HEK293 (cell line): ENCODE measurements at regions of chr2 and their contacts with region 1.

Region 1: DNA sequence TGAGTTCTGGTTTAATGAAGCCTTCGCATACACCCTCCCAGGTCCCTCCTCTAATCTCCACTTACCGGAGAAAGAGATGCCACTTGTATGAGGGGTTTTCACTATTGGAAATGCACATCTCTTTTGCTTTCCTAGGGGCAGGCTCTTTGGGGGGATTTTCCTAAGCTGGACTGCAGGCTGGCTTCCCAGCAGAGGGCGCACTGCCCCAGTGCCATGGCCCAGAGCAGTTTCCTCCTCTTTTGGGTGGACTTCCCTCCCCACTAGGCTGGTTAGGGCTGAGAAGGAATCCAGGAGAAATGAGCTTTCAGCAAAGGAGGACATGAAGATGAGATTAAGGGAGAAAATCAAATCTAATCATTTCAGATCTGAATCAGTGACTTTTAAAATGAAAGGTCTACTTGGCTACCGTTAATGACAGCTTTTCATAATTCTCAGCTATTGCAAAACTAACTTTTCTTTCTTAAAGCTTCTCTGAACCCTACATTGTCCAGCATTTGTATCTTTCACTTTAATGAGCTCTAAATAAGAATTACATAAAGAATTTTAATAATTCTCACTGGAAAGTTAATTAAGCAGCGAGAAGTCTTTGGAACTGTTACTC is 784.1 kb upstream of the FANCL start:
- H3K4me3 ChIP-seq: no peak overlapping the region
- H3K27ac ChIP-seq: no peak overlapping the region
- H3K4me1 ChIP-seq: no peaks in the 10 kb centered on the region
- CTCF ChIP-seq: peak; percentile 34; the same call in 1 of the 2 replicates

Region 2: GRCh38 chr2:58992062-58992706 is 33.1 kb before region 1 on chr2:
- CTCF ChIA-PET with region 1: interaction called, 10 read pairs
- POLR2A ChIA-PET with region 1: no interaction called
- H3K4me3 ChIP-seq: no peak overlapping the region
- H3K27ac ChIP-seq: no peak overlapping the region
- H3K4me1 ChIP-seq: no peaks in the 10 kb centered on the region
- CTCF ChIP-seq: no peak

Region 3: GRCh38 chr2:59000796-59001195 is 24.5 kb before region 1 on chr2:
- CTCF ChIA-PET with region 1: interaction called, 25 read pairs
- POLR2A ChIA-PET with region 1: no interaction called
- H3K4me3 ChIP-seq: no peak overlapping the region
- H3K27ac ChIP-seq: no peak overlapping the region
- H3K4me1 ChIP-seq: 0 out of 2 replicates have a peak, but pooled peaks cover 4% of the 10 kb centered on the region
- CTCF ChIP-seq: no peak

Region 4: GRCh38 chr2:59005836-59006615 is 19.2 kb before region 1 on chr2:
- CTCF ChIA-PET with region 1: interaction called, 26 read pairs
- POLR2A ChIA-PET with region 1: no interaction called
- H3K4me3 ChIP-seq: no peak overlapping the region
- H3K27ac ChIP-seq: no peak overlapping the region
- H3K4me1 ChIP-seq: 0 out of 2 replicates have a peak, but pooled peaks cover 4% of the 10 kb centered on the region
- CTCF ChIP-seq: no peak

Region 5: GRCh38 chr2:59015027-59015426 is 10.2 kb before region 1 on chr2:
- CTCF ChIA-PET with region 1: interaction called, 26 read pairs
- POLR2A ChIA-PET with region 1: no interaction called
- H3K4me3 ChIP-seq: no peak overlapping the region
- H3K27ac ChIP-seq: no peak overlapping the region
- H3K4me1 ChIP-seq: no peaks in the 10 kb centered on the region
- CTCF ChIP-seq: no peak

Region 6: GRCh38 chr2:59182249-59182648 is 157.0 kb after region 1 on chr2:
- CTCF ChIA-PET with region 1: interaction called, 11 read pairs
- POLR2A ChIA-PET with region 1: no interaction called
- H3K4me3 ChIP-seq: no peak overlapping the region
- H3K27ac ChIP-seq: no peak overlapping the region
- H3K4me1 ChIP-seq: no peaks in the 10 kb centered on the region
- CTCF ChIP-seq: no peak

Region 7: DNA sequence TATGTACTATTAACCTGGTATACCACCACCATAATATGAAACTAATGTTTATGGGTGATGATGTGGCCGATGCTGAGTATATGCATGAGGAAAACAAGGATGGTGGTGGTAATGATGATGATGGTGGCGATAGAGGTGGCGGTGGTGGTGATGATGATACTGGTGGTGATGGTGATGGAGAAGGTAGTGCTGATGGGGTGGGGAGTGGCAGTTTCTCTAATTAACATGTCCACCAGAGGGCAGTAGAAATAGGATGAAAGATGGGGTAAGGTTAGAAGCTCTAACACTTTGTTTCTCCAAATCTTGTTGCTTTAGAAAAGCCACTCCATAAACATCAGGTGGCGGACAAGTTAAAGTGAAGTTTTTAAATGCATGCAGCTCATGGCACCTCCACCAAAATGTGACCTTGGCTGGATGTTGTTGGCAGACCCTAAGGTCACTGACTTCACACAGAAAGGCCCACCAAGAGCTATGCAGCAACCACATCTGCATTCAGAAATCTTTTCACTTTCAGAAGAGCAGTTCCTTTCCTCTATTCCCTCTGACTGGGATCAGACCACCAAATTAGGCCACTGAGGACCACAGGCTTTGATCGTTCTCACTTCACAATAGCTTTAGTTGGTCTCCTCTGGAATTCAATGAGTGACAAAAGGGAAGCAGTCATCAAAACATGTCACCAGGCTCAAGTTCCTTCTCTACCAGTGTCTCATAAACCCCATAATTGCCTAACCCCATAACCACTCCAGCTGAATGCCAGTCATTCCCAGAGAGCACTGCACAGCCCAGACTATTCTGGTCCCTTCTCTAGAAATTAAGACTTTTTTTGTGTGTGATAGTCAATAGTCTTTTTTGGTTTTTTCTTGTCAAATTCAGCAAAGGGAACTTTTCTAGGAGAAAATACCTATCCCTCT is 1535.7 kb after region 1 on chr2:
- CTCF ChIA-PET with region 1: interaction called, 13 read pairs
- POLR2A ChIA-PET with region 1: no interaction called
- H3K4me3 ChIP-seq: no peak overlapping the region
- H3K27ac ChIP-seq: no peak overlapping the region
- H3K4me1 ChIP-seq: peaks cover 29% of the 10 kb centered on the region
- CTCF ChIP-seq: peak; percentile 77